ENCODE measurements at regions of chr13 and their contacts with region 1.

Region 1: DNA sequence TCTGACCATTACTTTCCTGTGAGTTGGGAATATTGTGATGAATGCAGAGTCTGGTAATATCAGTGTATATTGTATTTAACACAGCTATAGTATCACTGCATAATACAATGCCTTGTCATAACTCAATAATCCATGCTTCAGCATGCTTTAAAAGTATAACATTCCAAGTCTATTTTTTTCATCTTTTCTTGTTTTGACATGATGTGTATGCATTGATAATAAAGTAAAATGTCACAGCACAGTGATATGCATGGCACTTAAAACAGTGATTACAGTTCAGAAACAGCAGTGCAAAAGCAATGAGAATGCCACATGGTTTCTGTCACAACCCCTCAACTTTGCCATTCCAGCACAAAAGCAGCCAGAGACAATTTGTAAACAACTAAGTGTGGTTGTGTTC is 17.8 kb downstream of the KATNAL1 start:
- DNase-seq: no peak
- H3K4me3 ChIP-seq: no peak overlapping the region
- H3K4me3 Mint-ChIP-seq: no peak overlapping the region
- H3K27ac ChIP-seq: no peak overlapping the region
- H3K27ac Mint-ChIP-seq: no peak overlapping the region
- H3K4me1 ChIP-seq: no peaks in the 10 kb centered on the region
- H3K4me1 Mint-ChIP-seq: no peaks in the 10 kb centered on the region
- H3K27me3 ChIP-seq: no peaks in the 10 kb centered on the region
- H3K27me3 Mint-ChIP-seq: peaks cover 0 to 2% (median 0%) of the 10 kb centered on the region in 3 donors
- CTCF ChIP-seq: no peak

Region 2: DNA sequence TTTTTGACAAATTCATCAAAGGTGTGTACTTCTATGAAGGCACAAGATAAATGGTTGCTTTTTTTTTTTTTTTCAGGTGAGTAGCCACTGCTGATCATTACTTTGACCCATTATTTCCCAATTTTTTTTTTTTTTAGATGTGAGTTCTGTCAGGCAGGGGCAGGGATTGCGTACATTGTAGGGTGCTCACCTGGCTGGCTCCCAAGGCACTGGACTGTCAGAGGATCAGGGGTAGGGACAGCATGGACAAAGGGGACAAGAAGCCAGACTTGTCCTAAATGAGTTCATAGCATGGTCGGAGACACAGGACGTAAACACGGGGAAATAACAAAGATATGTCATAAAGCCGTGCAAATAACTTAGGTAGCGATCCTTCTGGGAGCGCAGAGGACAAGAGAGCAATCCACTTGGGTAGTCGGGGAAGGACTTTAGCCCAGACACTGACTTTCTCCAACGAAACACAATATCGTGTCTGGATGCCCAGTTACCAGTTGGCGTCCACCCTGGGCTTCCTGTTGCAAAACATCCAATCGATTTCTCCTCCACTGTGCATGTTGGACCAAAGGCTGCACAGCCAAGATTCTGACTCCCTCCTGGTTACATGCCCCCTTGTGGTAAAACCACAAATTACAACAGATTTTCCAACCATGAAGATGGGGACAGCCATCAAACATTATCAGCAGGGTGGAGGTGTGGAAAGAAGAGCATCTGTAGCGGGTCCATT is 45.3 kb after region 1 on chr13:
- intact Hi-C with region 1: loop called in 1 of 2 experiments (anchors 10 kb)
- DNase-seq: peak; percentile 11 to 34 (median 21)
- H3K4me3 ChIP-seq: no peak overlapping the region
- H3K4me3 Mint-ChIP-seq: no peak overlapping the region
- H3K27ac ChIP-seq: no peak overlapping the region
- H3K27ac Mint-ChIP-seq: peak overlapping the region in 1 of 7 donors; percentile 30
- H3K4me1 ChIP-seq: peaks cover 0 to under 1% of the 10 kb centered on the region in 2 donors
- H3K4me1 Mint-ChIP-seq: peaks cover 4% of the 10 kb centered on the region
- H3K27me3 ChIP-seq: no peaks in the 10 kb centered on the region
- H3K27me3 Mint-ChIP-seq: peaks cover 0 to 1% (median 1%) of the 10 kb centered on the region in 3 donors
- CTCF ChIP-seq: peak; percentile 74

Measured in CD14-positive monocyte (primary cell).